PC-9 (cell line): ENCODE measurements at regions of chr3 and their contacts with region 1.

Region 1: GRCh38 chr3:14672588-14672987 is 2.4 kb upstream of the C3orf20 start:
- DNase-seq: no peak
- H3K4me3 ChIP-seq: no peak overlapping the region
- H3K27ac ChIP-seq: no peak overlapping the region
- H3K4me1 ChIP-seq: no peaks in the 10 kb centered on the region
- H3K27me3 ChIP-seq: no peaks in the 10 kb centered on the region
- CTCF ChIP-seq: no peak

Region 2: GRCh38 chr3:13916375-13916774 is 756.2 kb before region 1 on chr3:
- CTCF ChIA-PET with region 1: no interaction called
- POLR2A ChIA-PET with region 1: no interaction called
- intact Hi-C with region 1: no loop called
- DNase-seq: no peak
- H3K4me3 ChIP-seq: no peak overlapping the region
- H3K27ac ChIP-seq: no peak overlapping the region
- H3K4me1 ChIP-seq: no peaks in the 10 kb centered on the region
- H3K27me3 ChIP-seq: peaks cover 18% of the 10 kb centered on the region; the same call in 1 of the 2 replicates
- CTCF ChIP-seq: no peak

Region 3: DNA sequence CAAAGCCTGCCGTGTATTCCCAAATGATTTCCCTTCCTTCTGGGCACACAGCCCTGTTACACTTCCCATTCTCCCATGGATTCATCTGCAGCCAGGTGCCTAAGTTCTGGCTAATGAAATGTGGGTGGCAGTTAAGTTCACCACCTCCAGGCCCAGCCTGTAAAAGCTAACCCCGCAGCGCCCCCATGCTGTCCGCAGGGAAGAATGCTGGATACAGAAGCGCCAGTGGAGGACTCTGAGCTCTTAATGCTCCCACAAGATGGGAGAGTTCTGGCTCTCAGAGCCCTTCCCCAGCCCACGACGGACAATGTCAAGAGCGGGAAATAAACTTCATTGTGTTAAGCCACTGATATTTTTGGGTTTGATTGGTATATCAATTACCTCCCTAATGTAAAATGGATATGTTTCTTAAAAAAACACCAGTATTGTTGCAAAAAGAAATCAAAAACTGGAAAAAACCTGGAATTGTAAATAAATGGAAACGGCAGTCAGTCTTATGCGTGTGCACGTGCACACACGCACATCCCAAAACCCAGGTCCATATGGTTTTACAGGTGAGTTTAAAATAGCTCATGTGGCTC is 108.4 kb after region 1 on chr3:
- CTCF ChIA-PET with region 1: interaction called, 4 read pairs
- POLR2A ChIA-PET with region 1: interaction called, 6 read pairs
- intact Hi-C with region 1: loop called (anchors 2 kb)
- DNase-seq: peak; percentile 38 to 43
- H3K4me3 ChIP-seq: no peak overlapping the region
- H3K27ac ChIP-seq: no peak overlapping the region
- H3K4me1 ChIP-seq: no peaks in the 10 kb centered on the region
- H3K27me3 ChIP-seq: peaks cover 4% of the 10 kb centered on the region; the same call in 1 of the 2 replicates
- CTCF ChIP-seq: peak; percentile 83

Region 4: DNA sequence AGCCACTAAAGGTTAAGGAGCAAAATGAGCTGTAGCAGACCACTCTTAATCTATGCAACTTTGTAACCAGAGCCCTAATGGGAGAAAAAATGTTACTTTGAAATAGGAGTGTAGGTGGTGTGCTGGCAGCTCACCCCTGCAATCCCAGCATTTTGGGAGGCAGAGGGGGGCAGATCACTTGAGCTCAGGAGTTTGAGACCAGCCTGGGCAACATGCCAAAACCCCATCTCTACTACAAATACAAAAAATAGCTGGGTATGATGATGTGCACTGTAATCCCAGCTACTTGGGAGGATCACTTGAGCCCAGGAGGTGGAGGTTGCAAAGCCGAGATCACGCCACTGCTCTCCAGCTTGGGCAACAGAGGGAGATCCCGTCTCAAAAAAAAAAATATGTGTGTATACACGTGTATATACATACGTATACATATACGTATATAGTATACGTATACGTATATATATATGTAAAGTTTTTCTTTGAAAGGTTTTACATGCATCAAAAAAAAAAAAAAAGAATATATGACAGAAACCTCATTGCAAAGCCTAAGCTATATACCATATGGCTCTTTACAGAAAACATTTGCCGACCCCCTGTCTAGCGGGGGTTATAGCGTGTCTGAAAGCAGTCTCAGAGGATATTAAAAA is 549.1 kb after region 1 on chr3:
- CTCF ChIA-PET with region 1: no interaction called
- POLR2A ChIA-PET with region 1: interaction called, 11 read pairs
- intact Hi-C with region 1: no loop called
- DNase-seq: no peak
- H3K4me3 ChIP-seq: no peak overlapping the region
- H3K27ac ChIP-seq: no peak overlapping the region
- H3K4me1 ChIP-seq: no peaks in the 10 kb centered on the region
- H3K27me3 ChIP-seq: no peaks in the 10 kb centered on the region
- CTCF ChIP-seq: no peak